RWPE1 (cell line): ENCODE measurements at regions of chr10 and their contacts with region 1.

Region 1: DNA sequence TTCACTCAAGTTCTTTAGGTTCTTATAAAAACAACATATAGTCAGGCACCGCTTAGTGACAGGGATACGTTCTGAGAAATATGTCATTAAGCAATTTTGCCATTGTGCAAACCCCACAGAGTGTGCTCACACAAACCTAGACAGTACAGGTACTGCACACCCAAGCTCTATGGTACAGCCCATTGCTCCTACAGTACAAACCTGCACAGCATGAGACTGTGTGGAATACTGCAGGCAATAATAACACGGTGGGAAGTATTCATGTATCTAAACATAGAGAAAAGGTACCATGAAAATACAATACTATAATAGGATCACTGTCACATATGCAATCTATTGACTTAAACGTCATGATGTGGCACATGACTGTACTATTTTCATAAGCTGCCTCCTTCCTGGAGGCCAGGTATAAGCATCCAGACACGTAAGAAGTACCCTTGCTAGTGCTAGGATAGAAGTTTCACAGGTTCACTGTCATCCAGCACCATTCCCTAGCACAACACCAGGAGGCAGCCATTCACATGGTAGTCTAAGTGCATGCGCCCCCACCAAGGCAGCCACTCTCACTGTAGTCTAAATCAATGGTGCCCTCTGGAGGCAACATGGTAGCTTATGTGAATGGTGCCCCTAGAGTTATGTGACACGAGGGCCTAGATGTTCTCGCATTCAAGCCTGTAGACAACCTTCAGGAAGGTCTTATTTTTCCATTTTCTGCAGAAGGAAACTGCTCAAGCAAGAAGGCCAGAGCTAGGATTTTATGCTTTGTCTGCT is 98.5 kb downstream of the ARHGAP22 start:
- DNase-seq: no peak
- H3K27ac ChIP-seq: no peak overlapping the region
- CTCF ChIP-seq: no peak

Region 2: GRCh38 chr10:48358162-48358561 is 148.2 kb before region 1 on chr10:
- CTCF ChIA-PET with region 1: interaction called, 12 read pairs
- POLR2A ChIA-PET with region 1: no interaction called
- DNase-seq: no peak
- H3K27ac ChIP-seq: no peak overlapping the region
- CTCF ChIP-seq: no peak

Region 3: DNA sequence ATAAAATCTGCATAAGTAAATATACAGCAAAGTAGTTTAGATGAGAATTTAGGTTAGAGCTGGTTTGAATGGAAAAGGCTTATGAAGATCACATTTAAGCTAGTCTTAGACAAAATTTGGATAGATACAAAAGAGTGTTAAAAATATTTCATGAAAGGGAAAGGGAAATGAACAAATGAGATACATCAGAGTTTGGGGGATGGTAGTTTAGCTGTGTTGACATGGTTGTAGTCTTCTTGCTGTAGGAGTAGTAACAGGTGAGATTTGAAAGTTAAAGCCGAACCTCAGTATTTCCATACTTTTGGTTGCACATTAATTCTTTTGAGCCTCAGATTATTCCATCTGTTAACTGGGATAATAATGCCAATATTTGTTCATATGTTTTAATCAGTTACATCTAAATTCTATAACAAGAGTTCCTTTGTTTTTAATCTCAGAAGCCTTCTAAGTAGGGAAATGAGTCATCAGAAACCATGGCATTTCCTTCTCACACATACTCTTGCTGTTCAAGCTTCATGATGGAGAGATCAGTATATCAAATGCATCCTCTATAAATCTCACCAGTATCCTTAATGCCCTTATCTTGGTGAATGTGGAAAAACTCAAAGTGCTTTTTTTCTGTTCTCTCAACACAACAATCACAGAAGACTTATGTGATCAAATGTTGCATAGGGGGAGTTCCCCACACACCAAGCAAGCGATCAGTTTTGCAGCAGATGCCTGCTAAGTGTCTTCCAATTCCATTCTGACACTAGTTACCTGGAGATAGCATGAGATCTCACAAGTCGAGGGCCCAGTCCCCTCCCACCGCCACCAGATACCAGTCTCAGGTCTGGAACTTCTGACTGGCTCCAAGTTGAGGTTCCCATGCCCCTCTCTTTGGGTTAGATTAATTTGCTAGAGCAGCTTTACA is 115.1 kb before region 1 on chr10:
- CTCF ChIA-PET with region 1: no interaction called
- POLR2A ChIA-PET with region 1: no interaction called
- DNase-seq: peak; percentile 11
- H3K27ac ChIP-seq: no peak overlapping the region
- CTCF ChIP-seq: no peak

Region 4: DNA sequence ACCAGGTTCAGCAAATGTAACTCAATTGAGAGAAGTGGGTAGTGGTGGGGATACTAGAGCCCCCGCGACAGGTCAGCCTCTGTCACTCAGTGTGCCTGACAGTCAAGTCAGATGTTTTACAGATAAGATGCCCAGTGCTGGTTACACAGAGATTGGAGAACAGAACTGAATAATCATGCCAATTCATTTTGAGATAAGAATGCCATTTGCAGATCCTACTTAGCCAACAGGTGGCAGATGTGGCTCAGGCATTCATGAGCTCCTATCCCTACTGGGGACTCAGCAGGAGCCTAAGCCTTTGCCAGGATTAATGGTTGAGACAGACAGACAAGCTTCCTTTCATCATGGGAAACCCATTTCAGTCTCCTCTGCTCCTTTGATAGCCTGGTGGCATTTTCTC is 62.1 kb before region 1 on chr10:
- CTCF ChIA-PET with region 1: interaction called, 15 read pairs
- POLR2A ChIA-PET with region 1: no interaction called
- DNase-seq: peak; percentile 57
- H3K27ac ChIP-seq: no peak overlapping the region
- CTCF ChIP-seq: no peak; the same call in 1 of the 2 replicates